ENCODE measurements at regions of chr12 and their contacts with region 1.

Region 1: DNA sequence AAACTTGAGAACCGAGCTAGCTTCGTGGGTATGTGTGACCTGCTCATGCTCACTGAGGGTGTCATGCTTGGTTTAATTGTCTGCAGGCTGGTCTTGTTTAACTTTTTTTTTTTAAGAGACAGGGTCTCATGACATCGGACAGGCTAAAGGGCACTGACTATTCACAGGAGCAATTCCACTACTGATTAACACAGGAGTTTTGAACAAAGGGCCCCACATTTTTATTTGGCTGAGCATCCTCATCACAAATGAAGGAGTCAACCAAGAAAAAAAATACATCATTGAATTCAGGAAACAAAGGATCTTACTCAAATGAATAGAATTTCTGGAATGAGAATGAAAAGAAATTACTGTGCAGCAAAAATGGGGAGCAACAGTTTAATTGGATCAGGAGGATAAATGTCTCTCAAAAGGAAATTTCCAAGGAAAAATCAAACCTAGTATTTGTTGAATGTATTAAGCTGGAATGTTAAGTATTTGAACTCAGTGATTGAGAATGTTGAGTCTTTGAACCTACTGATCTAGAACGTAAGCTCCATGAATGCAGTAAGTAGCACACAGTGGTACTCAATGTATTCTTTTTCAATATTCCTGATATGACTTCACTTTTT is 20.8 kb upstream of the PYROXD1 start:
- DNase-seq: peak; percentile 42
- ATAC-seq: peak; percentile 79
- H3K4me3 ChIP-seq: no peak overlapping the region
- H3K27ac ChIP-seq: no peak overlapping the region
- H3K4me1 ChIP-seq: no peaks in the 10 kb centered on the region
- H3K27me3 ChIP-seq: no peaks in the 10 kb centered on the region
- CTCF ChIP-seq: no peak
- POLR2A ChIP-seq: no peak
- RAD21 ChIP-seq: no peak

Region 2: DNA sequence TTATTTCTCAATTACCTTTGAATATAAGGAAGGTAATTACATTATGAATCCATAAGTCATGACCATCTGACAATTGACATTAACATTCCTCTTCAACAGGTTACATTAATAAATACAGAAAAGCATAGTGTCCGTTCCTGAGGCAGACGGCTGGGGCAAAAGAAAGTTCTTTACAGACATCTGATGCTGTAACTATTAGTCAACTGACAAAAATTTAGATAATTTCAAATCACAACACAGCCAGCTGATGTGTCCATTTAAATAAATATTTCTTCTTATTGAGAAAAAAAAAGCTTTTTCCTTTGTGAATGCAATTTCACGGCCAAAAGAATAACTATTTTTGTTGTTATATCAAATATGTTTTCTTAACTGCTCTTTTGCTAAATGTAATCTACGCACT is 11.6 kb after region 1 on chr12:
- CTCF ChIA-PET with region 1: no interaction called
- POLR2A ChIA-PET with region 1: no interaction called
- dilution Hi-C with region 1: no loop called
- in situ Hi-C with region 1: no loop called
- intact Hi-C with region 1: loop called (anchors 1 kb)
- DNase-seq: peak; percentile 45
- ATAC-seq: peak; percentile 77
- H3K4me3 ChIP-seq: no peak overlapping the region
- H3K27ac ChIP-seq: no peak overlapping the region
- H3K4me1 ChIP-seq: no peaks in the 10 kb centered on the region
- H3K27me3 ChIP-seq: peaks cover 4% of the 10 kb centered on the region
- CTCF ChIP-seq: no peak
- POLR2A ChIP-seq: no peak
- RAD21 ChIP-seq: no peak

Measured in IMR-90 (cell line).